HEK293 (cell line): ENCODE measurements at regions of chr1 and their contacts with region 1.

Region 1: GRCh38 chr1:173824331-173825081 is at the starts of genes CENPL and DARS2:
- H3K4me3 ChIP-seq: peak within 1 kb of the TSS; percentile 91
- H3K27ac ChIP-seq: peak within 1 kb of the TSS; percentile 74
- H3K4me1 ChIP-seq: no peaks in the 10 kb centered on the region; the same call in 1 of the 2 replicates
- CTCF ChIP-seq: peak; percentile 15

Region 2: DNA sequence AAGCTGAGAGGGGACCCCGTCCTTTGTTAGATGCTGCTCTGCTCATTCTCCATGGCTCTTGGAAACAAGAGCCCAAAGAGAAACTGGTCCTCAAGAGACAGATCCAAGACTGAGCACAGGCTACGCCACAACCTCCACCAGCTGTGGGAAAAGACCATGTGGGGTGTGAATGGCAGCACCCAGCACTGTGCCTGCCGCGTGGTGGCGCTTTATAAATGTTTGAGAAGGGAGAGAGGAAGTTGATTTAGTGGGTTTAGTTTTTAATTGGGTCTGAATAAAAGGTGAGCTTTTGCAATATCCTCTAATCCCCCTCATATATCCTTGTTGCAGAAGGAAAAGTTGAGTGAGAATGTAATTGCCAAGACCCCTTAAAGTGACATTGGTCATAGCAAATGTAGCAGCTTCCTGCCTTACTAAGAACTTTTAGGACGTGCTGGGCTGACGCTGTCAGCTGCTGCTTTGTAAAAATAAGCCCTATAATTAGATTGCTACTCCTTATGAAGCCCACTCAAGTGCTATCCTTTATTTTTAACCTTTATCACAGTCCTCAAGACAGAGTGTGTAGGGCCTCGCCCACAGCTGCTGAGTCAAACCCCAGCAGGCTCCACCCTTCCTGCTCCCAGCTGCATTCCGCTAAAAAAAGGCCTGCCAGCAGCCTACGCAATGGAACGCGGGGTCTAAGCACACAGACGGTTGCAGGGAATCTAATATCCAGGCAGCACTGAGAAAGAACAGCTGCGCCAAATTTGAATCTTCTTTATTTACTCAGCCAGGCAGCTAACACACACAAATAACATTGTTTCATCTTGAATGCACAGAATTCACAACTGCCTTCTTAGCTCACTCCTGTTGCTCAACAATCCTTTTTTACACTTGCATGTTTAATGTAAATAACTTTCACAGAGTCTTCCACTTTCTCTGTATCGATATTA is 394.8 kb before region 1 on chr1:
- CTCF ChIA-PET with region 1: interaction called, 26 read pairs
- POLR2A ChIA-PET with region 1: no interaction called
- H3K4me3 ChIP-seq: no peak overlapping the region
- H3K27ac ChIP-seq: no peak overlapping the region
- H3K4me1 ChIP-seq: no peaks in the 10 kb centered on the region
- CTCF ChIP-seq: no peak

Region 3: DNA sequence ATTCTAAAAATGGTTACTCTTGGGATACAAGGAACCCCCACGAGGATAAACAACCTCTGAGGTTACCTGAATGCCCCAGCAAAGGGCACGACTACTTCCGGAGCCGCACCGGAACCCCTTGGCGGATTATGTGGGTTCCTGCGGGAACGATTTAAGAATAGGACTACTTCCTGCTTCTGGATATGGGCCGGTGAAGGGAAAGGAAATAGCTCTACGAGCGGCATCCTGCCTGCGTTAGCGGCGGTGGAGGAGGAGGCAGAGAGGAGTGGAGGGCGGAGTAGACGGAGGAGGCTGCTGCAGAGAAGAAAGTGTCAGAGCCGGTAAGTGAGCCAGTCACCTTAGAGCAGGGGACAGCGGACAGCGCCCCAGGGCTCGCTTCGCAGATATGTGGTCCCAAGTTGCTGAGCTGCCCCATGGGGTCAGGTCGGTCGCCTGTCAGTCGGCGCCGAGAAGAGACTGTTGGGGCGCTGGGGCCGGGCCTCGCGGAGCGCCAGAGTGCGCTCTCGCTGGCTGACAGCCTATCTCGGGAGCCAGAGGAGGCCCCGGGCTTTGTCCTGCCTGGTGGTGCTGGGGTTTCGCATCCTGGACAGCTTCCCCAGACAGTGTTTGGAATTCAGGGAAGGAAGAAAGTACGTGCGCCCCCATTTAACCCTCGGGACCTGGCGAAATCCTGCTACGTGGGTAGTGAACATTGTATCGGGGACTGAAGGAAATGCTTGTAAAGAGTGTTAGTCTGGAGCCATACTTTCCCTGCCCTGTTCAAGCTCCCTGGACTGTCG is 109.6 kb before region 1 on chr1 and contains the start of gene KLHL20:
- CTCF ChIA-PET with region 1: no interaction called
- POLR2A ChIA-PET with region 1: interaction called, 10 read pairs
- H3K4me3 ChIP-seq: peak within 1 kb of the TSS; percentile 99
- H3K27ac ChIP-seq: peak within 1 kb of the TSS; percentile 38
- H3K4me1 ChIP-seq: no peaks in the 10 kb centered on the region
- CTCF ChIP-seq: peak; percentile 82

Region 4: DNA sequence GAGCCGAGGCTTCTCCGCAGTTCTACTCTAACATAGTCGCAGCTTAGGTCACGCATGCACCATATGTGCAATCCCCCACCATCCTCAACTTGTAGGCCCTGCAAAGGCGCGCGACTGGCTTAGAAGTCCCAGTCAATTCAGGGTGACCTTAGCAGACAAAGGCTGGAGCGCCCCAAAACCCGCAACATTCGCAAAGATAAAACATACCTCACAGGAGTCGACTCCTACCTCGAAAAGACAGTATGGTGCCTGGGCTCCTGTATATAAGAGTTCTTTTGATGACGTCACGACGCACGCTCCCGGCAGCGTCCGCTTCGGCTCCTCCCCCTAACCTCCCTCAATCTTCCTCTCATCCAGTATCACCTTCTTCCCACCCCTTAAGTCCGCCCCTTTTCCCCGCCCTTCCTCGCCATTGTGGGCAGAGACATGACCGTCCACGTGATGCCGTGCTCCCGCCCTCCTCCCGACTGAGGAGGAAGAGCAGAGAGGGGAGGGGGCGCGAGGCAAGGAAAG is 43.3 kb after region 1 on chr1 and contains the start of gene GAS5:
- CTCF ChIA-PET with region 1: no interaction called
- POLR2A ChIA-PET with region 1: interaction called, 28 read pairs
- H3K4me3 ChIP-seq: peak within 1 kb of the TSS; percentile 90
- H3K27ac ChIP-seq: peak within 1 kb of the TSS; percentile 86
- H3K4me1 ChIP-seq: no peaks in the 10 kb centered on the region; the same call in 1 of the 2 replicates
- CTCF ChIP-seq: no peak